Heart left ventricle (tissue), 16 donors: ENCODE measurements at regions of chr10 and their contacts with region 1.

Region 1: GRCh38 chr10:36393801-36394200 is 731.6 kb upstream of the ANKRD30A start:
- DNase-seq: no peak
- ATAC-seq: no peak
- H3K4me3 ChIP-seq: no peak overlapping the region
- H3K27ac ChIP-seq: no peak overlapping the region
- H3K4me1 ChIP-seq: no peaks in the 10 kb centered on the region
- H3K27me3 ChIP-seq: no peaks in the 10 kb centered on the region
- CTCF ChIP-seq: no peak
- POLR2A ChIP-seq: no peak

Region 2: DNA sequence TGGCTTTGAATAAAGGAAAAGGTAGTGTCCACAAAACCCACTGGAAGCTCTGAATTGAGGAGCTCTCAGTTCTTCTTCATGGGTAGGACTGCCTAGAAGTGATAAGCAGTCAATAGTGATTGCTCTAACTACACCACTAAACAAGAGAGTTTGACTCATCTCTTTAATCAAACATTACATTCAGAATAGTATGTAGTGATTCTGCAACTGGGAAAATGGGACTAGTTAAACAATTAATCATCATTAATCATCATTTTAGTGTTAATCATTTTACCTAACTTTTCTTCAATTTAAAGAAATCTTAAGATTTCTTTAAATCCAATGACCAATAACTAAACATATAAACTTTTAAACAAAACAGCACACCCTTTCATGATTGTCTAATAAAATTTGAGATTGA is 267.7 kb before region 1 on chr10:
- intact Hi-C with region 1: no loop called
- DNase-seq: no peak
- ATAC-seq: no peak
- H3K4me3 ChIP-seq: no peak overlapping the region
- H3K27ac ChIP-seq: no peak overlapping the region
- H3K4me1 ChIP-seq: no peaks in the 10 kb centered on the region
- H3K27me3 ChIP-seq: no peaks in the 10 kb centered on the region
- CTCF ChIP-seq: no peak
- POLR2A ChIP-seq: no peak

Region 3: GRCh38 chr10:36349445-36350078 is 44.2 kb before region 1 on chr10:
- intact Hi-C with region 1: no loop called
- DNase-seq: peak in 3 of 5 donors; percentile 11 to 34 (median 21)
- ATAC-seq: peak in 3 of 4 donors; percentile 42 to 84 (median 50)
- H3K4me3 ChIP-seq: no peak overlapping the region
- H3K27ac ChIP-seq: no peak overlapping the region
- H3K4me1 ChIP-seq: peaks cover 0 to 12% (median 0%) of the 10 kb centered on the region in 12 donors
- H3K27me3 ChIP-seq: no peaks in the 10 kb centered on the region
- CTCF ChIP-seq: no peak
- POLR2A ChIP-seq: no peak

Region 4: GRCh38 chr10:37584652-37585051 is 1190.9 kb after region 1 on chr10:
- intact Hi-C with region 1: loop called in 1 of 10 experiments (anchors 10 kb)
- DNase-seq: no peak
- ATAC-seq: no peak
- H3K4me3 ChIP-seq: no peak overlapping the region
- H3K27ac ChIP-seq: no peak overlapping the region
- H3K4me1 ChIP-seq: no peaks in the 10 kb centered on the region
- H3K27me3 ChIP-seq: no peaks in the 10 kb centered on the region
- CTCF ChIP-seq: no peak
- POLR2A ChIP-seq: no peak